Activated T-helper 1 cell treated with anti-CD3 and anti-CD28 coated beads, Interleukin-12 subunit alpha, Interleukin-12 subunit beta, Interleukin-2, Interleukin-4 antibody, amounts not matched to agents 30 ng/mL and 10 ng/mL and 1 ng/mL, durations not matched to agents 14 hours and 24 hours and 36 hours (primary cell): ENCODE measurements at regions of chr6 and their contacts with region 1.

Region 1: DNA sequence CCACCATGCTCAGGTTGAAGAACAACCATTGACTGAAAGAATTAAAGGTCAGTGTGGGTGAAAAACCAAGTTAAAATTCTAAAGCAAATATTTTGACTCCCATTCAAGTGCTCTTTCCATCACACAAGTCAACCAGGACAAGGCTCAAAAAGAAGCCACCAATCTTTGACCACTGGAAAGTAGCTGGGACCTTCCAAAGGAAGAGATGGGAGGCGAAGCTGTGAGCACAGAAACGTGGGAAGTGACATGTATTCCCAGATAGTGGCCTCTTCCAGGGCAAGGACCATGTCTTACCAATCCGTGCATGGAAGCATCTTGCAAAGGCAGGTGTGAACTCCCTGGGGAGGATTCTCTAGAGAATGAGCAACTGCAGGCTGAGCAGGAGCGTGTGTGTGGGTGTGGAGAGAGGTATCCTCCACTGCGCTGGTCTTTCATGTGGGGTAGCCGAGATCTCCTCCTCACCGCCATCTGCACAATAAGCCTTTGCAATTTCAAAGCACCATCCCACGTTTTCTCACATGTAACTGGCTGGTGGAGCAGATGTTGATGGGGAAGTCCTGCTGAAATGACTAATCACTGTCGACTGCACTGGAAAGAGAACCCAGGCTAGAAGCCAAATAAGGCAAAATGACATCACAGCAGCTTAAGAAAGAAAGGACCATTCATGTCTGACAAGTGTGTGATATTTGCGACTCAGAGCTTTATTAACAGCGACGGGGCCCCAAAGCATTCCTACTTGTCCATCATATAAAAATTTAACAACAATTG is 189.4 kb upstream of the RREB1 start:
- DNase-seq: peak; percentile 44
- H3K4me3 Mint-ChIP-seq: no peak overlapping the region
- H3K27ac Mint-ChIP-seq: peak overlapping the region; percentile 55
- H3K4me1 Mint-ChIP-seq: peaks cover 37% of the 10 kb centered on the region
- H3K27me3 Mint-ChIP-seq: peaks cover 18% of the 10 kb centered on the region

Region 2: GRCh38 chr6:6556738-6557505 is 361.5 kb before region 1 on chr6:
- intact Hi-C with region 1: loop called (anchors 10 kb)
- DNase-seq: peak; percentile 15
- H3K4me3 Mint-ChIP-seq: no peak overlapping the region
- H3K27ac Mint-ChIP-seq: no peak overlapping the region
- H3K4me1 Mint-ChIP-seq: peaks cover 49% of the 10 kb centered on the region
- H3K27me3 Mint-ChIP-seq: peaks cover 16% of the 10 kb centered on the region

Region 3: DNA sequence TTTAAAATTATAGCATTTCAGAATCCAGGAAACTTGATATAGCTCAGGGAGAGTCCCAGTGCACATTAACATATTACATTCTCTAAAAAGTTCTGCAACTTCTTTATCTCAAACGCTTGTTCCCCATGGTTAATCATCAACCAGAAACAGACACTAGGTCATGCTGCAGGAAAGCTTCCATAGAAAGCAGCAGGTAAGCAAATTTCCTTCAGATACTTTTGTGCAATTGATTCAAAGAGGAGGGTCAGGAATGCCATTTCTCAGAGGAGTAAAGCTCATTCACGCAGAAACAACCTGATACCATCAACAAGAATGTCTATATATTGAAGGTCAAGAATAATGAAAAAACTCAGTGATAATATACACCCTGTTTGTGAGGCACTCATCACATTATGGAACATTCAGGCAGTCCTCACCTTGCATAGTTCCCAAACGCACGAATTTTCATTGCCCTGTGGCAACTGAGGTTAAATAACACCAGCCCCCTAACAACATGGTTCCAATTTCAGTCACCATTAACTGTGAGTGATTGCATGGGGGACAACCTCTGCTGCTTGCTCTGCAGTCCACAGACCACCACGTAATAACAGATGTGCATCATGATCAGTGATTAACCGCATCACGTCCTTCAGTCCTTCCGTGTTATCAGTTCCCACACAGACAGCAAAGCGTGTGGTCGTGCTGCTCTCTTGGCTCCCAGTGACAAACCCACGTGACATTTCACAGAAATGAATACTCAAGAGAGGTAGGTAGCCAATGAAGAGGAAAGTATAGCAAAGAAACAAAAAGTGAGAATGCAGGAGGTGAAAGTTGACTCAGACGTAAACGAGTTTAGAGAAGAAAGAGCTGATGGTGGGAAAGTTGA is 234.2 kb before region 1 on chr6:
- intact Hi-C with region 1: loop called (anchors 2 kb)
- DNase-seq: peak; percentile 14
- H3K4me3 Mint-ChIP-seq: peak overlapping the region; percentile 2
- H3K27ac Mint-ChIP-seq: peak overlapping the region; percentile 11
- H3K4me1 Mint-ChIP-seq: peaks cover 58% of the 10 kb centered on the region
- H3K27me3 Mint-ChIP-seq: peaks cover 6% of the 10 kb centered on the region

Region 4: GRCh38 chr6:6851059-6851948 is 67.1 kb before region 1 on chr6:
- intact Hi-C with region 1: loop called (anchors 1 kb)
- DNase-seq: no peak
- H3K4me3 Mint-ChIP-seq: no peak overlapping the region
- H3K27ac Mint-ChIP-seq: no peak overlapping the region
- H3K4me1 Mint-ChIP-seq: peaks cover 33% of the 10 kb centered on the region
- H3K27me3 Mint-ChIP-seq: peaks cover 3% of the 10 kb centered on the region

Region 5: DNA sequence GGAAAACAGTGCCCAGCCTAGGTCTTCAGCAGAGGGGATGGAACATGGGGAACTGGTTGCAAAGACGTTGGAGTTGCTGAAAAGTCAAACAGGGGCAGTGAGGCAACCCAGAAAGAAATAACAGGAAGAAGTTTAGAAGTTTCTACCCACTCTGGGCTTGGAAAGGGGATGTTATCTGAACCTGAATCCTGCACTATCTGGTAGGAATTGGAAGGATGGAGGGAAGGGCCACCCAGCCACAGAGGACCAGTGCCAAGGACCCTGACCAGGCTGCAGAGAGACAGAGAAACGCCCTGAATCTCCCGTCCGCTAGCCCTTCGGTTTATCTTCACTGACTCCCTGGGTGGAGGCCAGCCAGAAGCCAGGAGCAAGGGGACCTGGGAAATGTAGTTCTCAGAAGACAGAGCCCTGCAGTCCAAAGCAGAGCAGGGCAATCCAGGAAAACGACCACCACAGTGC is 28.0 kb before region 1 on chr6:
- intact Hi-C with region 1: no loop called
- DNase-seq: no peak
- H3K4me3 Mint-ChIP-seq: no peak overlapping the region
- H3K27ac Mint-ChIP-seq: no peak overlapping the region
- H3K4me1 Mint-ChIP-seq: no peaks in the 10 kb centered on the region
- H3K27me3 Mint-ChIP-seq: no peaks in the 10 kb centered on the region

Region 6: DNA sequence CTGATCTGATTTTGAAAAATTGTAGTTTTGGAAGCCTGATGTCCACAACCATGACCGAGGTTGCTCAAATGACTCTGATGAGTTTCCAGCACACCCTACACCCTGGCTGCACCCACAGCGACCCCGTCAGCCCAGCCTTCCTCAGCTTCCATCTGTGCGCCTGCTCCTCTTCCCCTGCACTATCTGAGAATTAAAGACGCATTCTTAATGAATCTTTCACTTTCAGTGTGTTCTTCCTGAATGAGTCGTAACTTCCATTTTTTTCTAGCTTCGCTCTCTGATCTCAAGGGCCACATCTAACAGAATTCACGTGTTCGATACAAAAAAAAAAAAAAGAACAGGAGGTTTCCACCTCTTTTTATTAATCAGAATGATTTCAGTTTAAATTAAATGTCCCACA is 168.1 kb after region 1 on chr6:
- intact Hi-C with region 1: loop called (anchors 5 kb)
- DNase-seq: no peak
- H3K4me3 Mint-ChIP-seq: peak overlapping the region; percentile 63
- H3K27ac Mint-ChIP-seq: no peak overlapping the region
- H3K4me1 Mint-ChIP-seq: peaks cover 27% of the 10 kb centered on the region
- H3K27me3 Mint-ChIP-seq: peaks cover 81% of the 10 kb centered on the region

Region 7: GRCh38 chr6:7238900-7239589 is 320.6 kb after region 1 on chr6:
- intact Hi-C with region 1: loop called (anchors 1 kb)
- DNase-seq: peak; percentile 53
- H3K4me3 Mint-ChIP-seq: no peak overlapping the region
- H3K27ac Mint-ChIP-seq: no peak overlapping the region
- H3K4me1 Mint-ChIP-seq: peaks cover 9% of the 10 kb centered on the region
- H3K27me3 Mint-ChIP-seq: no peaks in the 10 kb centered on the region